A549 (cell line): ENCODE measurements at regions of chr5 and their contacts with region 1.

Region 1: GRCh38 chr5:90409318-90410177 is at the start of gene CETN3:
- DNase-seq: peak; percentile 84 to 96
- ATAC-seq: peak; percentile 96 to 98
- H3K4me3 ChIP-seq: peak within 1 kb of the TSS; percentile 89
- H3K27ac ChIP-seq: peak within 1 kb of the TSS; percentile 93 to 96
- H3K4me1 ChIP-seq: peaks cover 25% of the 10 kb centered on the region; the same call in 2 of the 3 replicates
- CTCF ChIP-seq: 0 out of 3 replicates have a peak, but pooled peaks have one; percentile 8
- EP300 ChIP-seq: no peak
- POLR2A ChIP-seq: peak; percentile 97
- RAD21 ChIP-seq: no peak
- polyA plus RNA-seq, gene CETN3: 18.4 and 50.8 TPM in 2 replicates

Region 2: DNA sequence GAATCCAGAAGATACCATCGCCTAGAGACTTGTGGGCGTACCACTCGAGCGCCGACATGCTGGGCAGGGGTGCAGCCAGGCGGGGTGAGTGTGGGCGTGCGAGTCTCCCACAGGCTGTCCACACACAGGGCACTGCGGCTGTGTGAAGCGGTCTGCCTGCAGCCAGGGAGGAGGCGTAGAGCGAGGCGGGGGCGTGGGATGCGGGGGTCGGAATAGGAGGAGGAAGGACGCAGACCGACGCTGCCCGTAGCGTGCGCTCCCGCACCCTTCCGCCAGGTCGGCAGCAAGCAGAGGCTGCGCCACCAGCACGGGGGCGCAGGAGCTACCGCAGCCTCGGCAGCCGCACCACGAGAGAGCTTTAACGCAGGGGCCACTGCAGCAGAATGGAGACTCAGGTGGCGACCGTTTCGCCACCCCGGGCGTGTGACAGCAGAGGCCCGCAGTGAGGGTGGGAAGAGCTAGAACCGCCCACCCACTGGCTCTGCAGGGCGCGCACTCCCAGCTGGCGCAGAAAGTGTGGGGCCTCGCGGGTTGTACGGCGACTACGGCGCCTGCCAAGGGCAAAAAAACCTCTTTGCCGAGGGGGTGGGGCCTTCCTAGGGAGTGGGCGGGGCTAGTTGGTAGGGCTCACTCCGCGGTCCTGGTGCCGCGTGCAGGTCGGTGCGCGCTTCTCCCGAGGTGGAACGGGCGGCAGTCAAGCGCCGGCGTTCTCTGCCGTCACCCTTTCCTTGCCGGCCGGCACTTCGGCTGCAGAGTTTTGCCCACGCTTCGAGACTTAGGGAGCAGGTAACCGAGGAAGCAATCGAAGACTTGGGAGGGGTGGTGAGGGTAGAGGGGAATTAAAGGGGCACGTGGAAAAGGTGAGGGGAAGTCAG is 64.9 kb after region 1 on chr5 and contains the starts of genes MBLAC2 and POLR3G:
- CTCF ChIA-PET with region 1: interaction called, 3 read pairs
- POLR2A ChIA-PET with region 1: interaction called, 46 read pairs
- DNase-seq: peak; percentile 80 to 96
- ATAC-seq: peak; percentile 91 to 94
- H3K4me3 ChIP-seq: peak within 1 kb of the TSS; percentile 80
- H3K27ac ChIP-seq: peak within 1 kb of the TSS; percentile 92 to 94
- H3K4me1 ChIP-seq: peaks cover 13% of the 10 kb centered on the region
- CTCF ChIP-seq: no peak; the same call in 2 of the 3 replicates
- EP300 ChIP-seq: no peak
- POLR2A ChIP-seq: peak; percentile 77
- RAD21 ChIP-seq: 0 out of 5 replicates have a peak, but pooled peaks of 1 of the 2 experiments have one; percentile 2
- polyA plus RNA-seq, gene MBLAC2: 4.4 and 5.3 TPM in 2 replicates
- polyA plus RNA-seq, gene POLR3G: 15.7 and 22.6 TPM in 2 replicates

Region 3: GRCh38 chr5:91408710-91409109 is 999.2 kb after region 1 on chr5:
- CTCF ChIA-PET with region 1: no interaction called
- POLR2A ChIA-PET with region 1: interaction called, 11 read pairs
- DNase-seq: no peak
- ATAC-seq: no peak
- H3K4me3 ChIP-seq: no peak overlapping the region
- H3K27ac ChIP-seq: no peak overlapping the region
- H3K4me1 ChIP-seq: peaks cover 9% of the 10 kb centered on the region
- CTCF ChIP-seq: no peak
- EP300 ChIP-seq: no peak
- POLR2A ChIP-seq: no peak
- RAD21 ChIP-seq: no peak